Testis (tissue), 5 donors: ENCODE measurements at regions of chr1 and their contacts with region 1.

Region 1: GRCh38 chr1:39822091-39822490 is 33.4 kb upstream of the BMP8B start:
- DNase-seq: no peak
- H3K4me3 ChIP-seq: no peak overlapping the region
- H3K27ac ChIP-seq: no peak overlapping the region
- H3K4me1 ChIP-seq: no peaks in the 10 kb centered on the region
- H3K27me3 ChIP-seq: no peaks in the 10 kb centered on the region
- CTCF ChIP-seq: no peak
- POLR2A ChIP-seq: no peak

Region 2: DNA sequence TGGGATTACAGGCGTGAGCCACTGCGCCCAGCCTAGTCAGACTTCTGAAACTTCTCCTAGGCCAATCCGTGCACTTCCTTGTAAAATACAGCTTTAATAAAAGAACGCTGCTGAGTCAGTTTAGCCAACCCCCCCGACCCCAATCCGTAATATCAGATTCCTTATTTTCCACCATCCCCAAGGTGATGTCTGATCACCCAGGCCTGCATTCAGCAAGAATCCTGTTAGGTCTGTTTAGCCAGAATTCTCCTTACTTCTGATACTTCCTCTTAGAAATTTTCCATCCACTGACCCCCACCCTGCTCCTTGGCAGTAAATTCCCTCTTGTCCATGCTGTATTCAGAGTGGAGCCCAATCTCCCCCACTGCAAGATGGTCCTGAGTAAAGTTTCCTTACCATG is 234.0 kb before region 1 on chr1:
- intact Hi-C with region 1: no loop called
- DNase-seq: no peak
- H3K4me3 ChIP-seq: no peak overlapping the region
- H3K27ac ChIP-seq: no peak overlapping the region
- H3K4me1 ChIP-seq: no peaks in the 10 kb centered on the region
- H3K27me3 ChIP-seq: no peaks in the 10 kb centered on the region
- CTCF ChIP-seq: no peak
- POLR2A ChIP-seq: no peak

Region 3: GRCh38 chr1:39973503-39974135 is 151.5 kb after region 1 on chr1:
- intact Hi-C with region 1: loop called (anchors 5 kb)
- DNase-seq: peak; percentile 90
- H3K4me3 ChIP-seq: no peak overlapping the region
- H3K27ac ChIP-seq: no peak overlapping the region
- H3K4me1 ChIP-seq: no peaks in the 10 kb centered on the region
- H3K27me3 ChIP-seq: no peaks in the 10 kb centered on the region
- CTCF ChIP-seq: peak; percentile 93 to 97 (median 95)
- POLR2A ChIP-seq: no peak